ENCODE measurements at regions of chr20 and their contacts with region 1.

Region 1: GRCh38 chr20:6708010-6708409 is 59.5 kb upstream of the BMP2 start:
- DNase-seq: peak; percentile 83 to 92
- H3K4me3 ChIP-seq: no peak overlapping the region
- H3K4me3 Mint-ChIP-seq: peak overlapping the region; percentile 57
- H3K27ac Mint-ChIP-seq: peak overlapping the region; percentile 89
- H3K4me1 ChIP-seq: peaks cover 92% of the 10 kb centered on the region
- H3K4me1 Mint-ChIP-seq: peaks cover 82% of the 10 kb centered on the region
- H3K27me3 ChIP-seq: no peaks in the 10 kb centered on the region
- H3K27me3 Mint-ChIP-seq: no peaks in the 10 kb centered on the region
- CTCF ChIP-seq: no peak

Region 2: GRCh38 chr20:6644813-6645628 is 63.0 kb before region 1 on chr20:
- CTCF ChIA-PET with region 1: no interaction called
- POLR2A ChIA-PET with region 1: no interaction called
- intact Hi-C with region 1: no loop called
- DNase-seq: no peak
- H3K4me3 ChIP-seq: no peak overlapping the region
- H3K4me3 Mint-ChIP-seq: no peak overlapping the region
- H3K27ac Mint-ChIP-seq: no peak overlapping the region
- H3K4me1 ChIP-seq: peaks cover 9% of the 10 kb centered on the region; the same call in 1 of the 2 replicates
- H3K4me1 Mint-ChIP-seq: peaks cover 23% of the 10 kb centered on the region
- H3K27me3 ChIP-seq: no peaks in the 10 kb centered on the region
- H3K27me3 Mint-ChIP-seq: no peaks in the 10 kb centered on the region
- CTCF ChIP-seq: no peak

Region 3: GRCh38 chr20:6663104-6663503 is 44.9 kb before region 1 on chr20:
- CTCF ChIA-PET with region 1: no interaction called
- POLR2A ChIA-PET with region 1: interaction called, 11 read pairs
- intact Hi-C with region 1: no loop called
- DNase-seq: no peak
- H3K4me3 ChIP-seq: no peak overlapping the region
- H3K4me3 Mint-ChIP-seq: no peak overlapping the region
- H3K27ac Mint-ChIP-seq: no peak overlapping the region
- H3K4me1 ChIP-seq: peaks cover 36% of the 10 kb centered on the region
- H3K4me1 Mint-ChIP-seq: peaks cover 34% of the 10 kb centered on the region
- H3K27me3 ChIP-seq: no peaks in the 10 kb centered on the region
- H3K27me3 Mint-ChIP-seq: no peaks in the 10 kb centered on the region
- CTCF ChIP-seq: no peak

Region 4: GRCh38 chr20:6692568-6693173 is 15.3 kb before region 1 on chr20:
- CTCF ChIA-PET with region 1: interaction called, 7 read pairs
- POLR2A ChIA-PET with region 1: interaction called, 24 read pairs
- intact Hi-C with region 1: loop called (anchors 1 kb)
- DNase-seq: peak; percentile 45 to 51
- H3K4me3 ChIP-seq: no peak overlapping the region
- H3K4me3 Mint-ChIP-seq: no peak overlapping the region
- H3K27ac Mint-ChIP-seq: peak overlapping the region; percentile 99
- H3K4me1 ChIP-seq: peaks cover 55% of the 10 kb centered on the region
- H3K4me1 Mint-ChIP-seq: peaks cover 65% of the 10 kb centered on the region
- H3K27me3 ChIP-seq: no peaks in the 10 kb centered on the region
- H3K27me3 Mint-ChIP-seq: no peaks in the 10 kb centered on the region
- CTCF ChIP-seq: no peak

Region 5: DNA sequence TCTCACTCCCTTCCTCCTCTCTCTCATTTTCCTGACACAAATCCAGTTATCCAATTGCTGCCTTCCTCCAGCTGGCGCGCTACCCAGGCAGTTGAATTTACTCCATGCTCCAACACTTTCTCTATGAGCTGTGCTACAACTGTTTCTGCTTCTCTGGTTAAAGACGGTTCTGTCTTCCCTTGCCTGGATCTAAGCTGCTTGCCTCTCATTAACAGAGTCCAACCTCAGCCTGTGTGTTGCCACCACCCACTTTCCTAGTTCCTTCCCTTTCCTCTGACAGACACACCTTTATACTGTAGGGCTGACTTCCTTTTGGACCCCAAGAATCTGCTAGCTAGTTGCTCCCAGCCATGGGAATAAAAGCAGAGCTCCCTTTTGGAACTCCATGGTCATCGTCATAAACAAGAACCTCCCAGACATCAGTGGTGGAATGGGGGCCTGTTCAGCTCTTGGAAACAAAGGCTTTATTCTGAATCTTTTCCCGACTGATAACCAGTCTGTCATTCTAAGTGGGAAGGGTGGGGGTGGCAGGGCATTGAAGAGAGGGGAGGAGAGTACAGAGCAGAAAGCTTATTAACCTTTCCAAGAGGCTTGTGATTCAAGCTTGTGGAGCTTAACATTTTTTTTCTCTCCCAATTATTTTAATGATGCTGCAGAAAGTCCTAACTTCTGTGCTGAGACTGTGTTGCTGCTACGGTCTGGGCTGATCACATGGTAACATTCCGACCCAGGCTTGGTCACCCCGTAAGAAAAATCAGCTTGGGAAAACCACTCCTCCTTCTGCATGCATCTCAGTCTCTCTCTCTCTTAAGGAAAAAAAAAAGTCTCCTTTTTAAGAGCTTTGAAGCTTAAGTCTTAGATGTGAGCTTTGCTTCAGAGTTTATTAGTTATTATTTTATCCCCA is 28.2 kb after region 1 on chr20:
- CTCF ChIA-PET with region 1: interaction called, 6 read pairs
- POLR2A ChIA-PET with region 1: interaction called, 10 read pairs
- intact Hi-C with region 1: loop called (anchors 1 kb)
- DNase-seq: peak; percentile 37 to 55
- H3K4me3 ChIP-seq: peak overlapping the region; percentile 11
- H3K4me3 Mint-ChIP-seq: peak overlapping the region; percentile 70
- H3K27ac Mint-ChIP-seq: peak overlapping the region; percentile 67
- H3K4me1 ChIP-seq: peaks cover 33% of the 10 kb centered on the region
- H3K4me1 Mint-ChIP-seq: peaks cover 41% of the 10 kb centered on the region
- H3K27me3 ChIP-seq: no peaks in the 10 kb centered on the region
- H3K27me3 Mint-ChIP-seq: no peaks in the 10 kb centered on the region
- CTCF ChIP-seq: no peak

Region 6: DNA sequence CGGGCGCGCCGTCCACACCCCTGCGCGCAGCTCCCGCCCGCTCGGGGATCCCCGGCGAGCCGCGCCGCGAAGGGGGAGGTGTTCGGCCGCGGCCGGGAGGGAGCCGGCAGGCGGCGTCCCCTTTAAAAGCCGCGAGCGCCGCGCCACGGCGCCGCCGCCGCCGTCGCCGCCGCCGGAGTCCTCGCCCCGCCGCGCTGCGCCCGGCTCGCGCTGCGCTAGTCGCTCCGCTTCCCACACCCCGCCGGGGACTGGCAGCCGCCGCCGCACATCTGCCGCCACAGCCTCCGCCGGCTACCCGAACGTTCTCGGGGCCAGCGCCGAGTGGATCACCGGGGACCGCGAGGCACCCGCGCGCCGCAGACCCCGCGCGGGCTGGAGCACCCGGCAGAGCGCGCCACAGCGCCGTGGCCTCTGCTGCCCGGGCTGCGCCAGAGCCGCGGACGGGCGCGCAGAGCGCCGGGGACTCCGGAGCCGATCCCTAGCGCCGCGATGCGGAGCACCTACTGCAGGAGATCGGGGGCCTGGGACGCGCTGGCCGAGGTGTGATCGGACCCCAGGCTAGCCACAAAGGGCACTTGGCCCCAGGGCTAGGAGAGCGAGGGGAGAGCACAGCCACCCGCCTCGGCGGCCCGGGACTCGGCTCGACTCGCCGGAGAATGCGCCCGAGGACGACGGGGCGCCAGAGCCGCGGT is 59.7 kb after region 1 on chr20 and contains the start of gene BMP2:
- CTCF ChIA-PET with region 1: no interaction called
- POLR2A ChIA-PET with region 1: interaction called, 4 read pairs
- intact Hi-C with region 1: loop called (anchors 1 kb)
- DNase-seq: peak; percentile 63 to 79
- H3K4me3 ChIP-seq: peak within 1 kb of the TSS; percentile 96
- H3K4me3 Mint-ChIP-seq: peak within 1 kb of the TSS; percentile 92
- H3K27ac Mint-ChIP-seq: peak within 1 kb of the TSS; percentile 53
- H3K4me1 ChIP-seq: peaks cover 21% of the 10 kb centered on the region
- H3K4me1 Mint-ChIP-seq: peaks cover 33% of the 10 kb centered on the region
- H3K27me3 ChIP-seq: no peaks in the 10 kb centered on the region
- H3K27me3 Mint-ChIP-seq: no peaks in the 10 kb centered on the region
- CTCF ChIP-seq: no peak
- total RNA-seq, gene BMP2: 24.3 and 27.3 TPM in 2 replicates

Region 7: DNA sequence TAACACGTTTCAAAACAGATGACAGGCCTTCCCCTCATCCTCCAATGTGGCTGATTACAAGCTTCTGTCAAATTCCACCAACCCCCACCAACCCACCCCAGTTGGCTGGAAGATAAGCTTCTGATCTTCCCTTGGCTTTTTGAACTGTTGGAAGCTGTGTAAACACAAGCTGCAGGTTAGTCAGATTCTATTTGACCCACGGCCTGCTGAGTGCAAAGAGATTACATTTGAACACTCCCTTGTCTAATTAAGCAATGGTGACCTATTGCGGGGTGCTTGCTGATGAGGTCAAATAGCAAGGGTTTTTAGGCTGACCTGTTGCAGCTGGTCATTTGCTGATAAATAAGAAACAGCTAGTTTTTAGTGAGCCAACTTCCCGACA is 439.2 kb after region 1 on chr20:
- CTCF ChIA-PET with region 1: no interaction called
- POLR2A ChIA-PET with region 1: no interaction called
- intact Hi-C with region 1: loop called (anchors 10 kb)
- DNase-seq: peak; percentile 82 to 89
- H3K4me3 ChIP-seq: no peak overlapping the region
- H3K4me3 Mint-ChIP-seq: peak overlapping the region; percentile 53
- H3K27ac Mint-ChIP-seq: peak overlapping the region; percentile 73
- H3K4me1 ChIP-seq: peaks cover 33% of the 10 kb centered on the region
- H3K4me1 Mint-ChIP-seq: peaks cover 43% of the 10 kb centered on the region
- H3K27me3 ChIP-seq: no peaks in the 10 kb centered on the region
- H3K27me3 Mint-ChIP-seq: no peaks in the 10 kb centered on the region
- CTCF ChIP-seq: no peak

Measured in Caco-2 (cell line).